Panc1 (cell line): ENCODE measurements at regions of chr16 and their contacts with region 1.

Region 1: DNA sequence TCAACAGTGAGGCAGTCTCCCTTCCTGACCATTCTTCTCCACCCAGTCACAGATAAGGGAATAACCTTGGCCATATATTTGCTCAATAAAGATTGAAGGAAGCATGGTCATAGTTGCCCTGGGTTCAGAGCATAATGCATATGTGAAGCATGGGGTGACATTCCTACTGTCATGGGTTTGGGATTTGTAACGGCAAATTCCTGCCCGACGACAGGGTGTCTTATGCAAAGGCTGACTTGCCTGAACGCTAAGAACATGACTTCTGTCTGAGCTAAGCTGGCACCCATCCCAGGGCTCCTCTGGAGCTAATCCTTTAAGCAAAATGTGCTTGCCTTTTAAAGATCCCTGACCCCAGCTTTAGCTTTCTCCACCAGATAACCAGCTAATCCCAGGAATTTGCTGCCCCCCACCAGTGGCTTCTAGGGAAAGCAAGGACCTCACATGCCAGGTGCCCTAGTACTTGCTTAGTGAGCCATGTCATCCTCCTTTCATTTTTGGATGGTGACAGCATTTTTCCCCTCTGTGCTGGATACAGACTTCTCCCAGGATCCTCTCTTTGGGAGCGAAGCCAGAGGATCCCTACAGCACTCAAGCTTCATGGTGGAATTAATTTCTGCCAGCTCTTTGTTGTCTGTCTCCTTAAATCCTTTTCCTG is 11.7 kb downstream of the SLC7A6OS start:
- DNase-seq: no peak
- ATAC-seq: peak; percentile 40
- H3K4me3 ChIP-seq: no peak overlapping the region
- H3K27ac ChIP-seq: no peak overlapping the region
- H3K4me1 ChIP-seq: peaks cover 22% of the 10 kb centered on the region
- H3K27me3 ChIP-seq: no peaks in the 10 kb centered on the region
- CTCF ChIP-seq: no peak

Region 2: DNA sequence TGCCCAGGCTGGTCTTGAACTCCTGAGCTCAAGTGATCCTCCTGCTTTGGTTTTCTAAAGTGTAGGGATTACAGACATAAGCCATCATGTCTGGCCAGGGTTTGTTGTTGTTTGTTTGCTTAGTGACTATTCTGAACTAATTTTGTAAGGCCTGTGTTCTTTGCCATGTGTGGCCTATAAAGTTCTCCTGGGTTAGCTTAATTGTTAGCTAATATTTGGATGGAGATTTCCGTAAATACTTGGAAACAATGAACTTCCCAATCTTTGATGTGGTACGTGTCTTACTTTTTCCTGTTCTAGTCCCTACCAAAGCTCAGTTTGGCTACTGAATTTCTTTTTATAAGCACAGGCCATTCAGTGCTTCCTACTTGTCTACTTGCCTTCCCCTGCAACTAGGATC is 251.0 kb before region 1 on chr16:
- CTCF ChIA-PET with region 1: no interaction called
- POLR2A ChIA-PET with region 1: interaction called, 10 read pairs
- in situ Hi-C with region 1: no loop called
- intact Hi-C with region 1: no loop called
- DNase-seq: no peak
- ATAC-seq: no peak
- H3K4me3 ChIP-seq: no peak overlapping the region
- H3K27ac ChIP-seq: no peak overlapping the region
- H3K4me1 ChIP-seq: no peaks in the 10 kb centered on the region
- H3K27me3 ChIP-seq: no peaks in the 10 kb centered on the region
- CTCF ChIP-seq: no peak

Region 3: GRCh38 chr16:68275611-68276191 is 23.3 kb before region 1 on chr16:
- CTCF ChIA-PET with region 1: no interaction called
- POLR2A ChIA-PET with region 1: no interaction called
- in situ Hi-C with region 1: no loop called
- intact Hi-C with region 1: no loop called
- DNase-seq: no peak
- ATAC-seq: no peak
- H3K4me3 ChIP-seq: no peak overlapping the region
- H3K27ac ChIP-seq: no peak overlapping the region
- H3K4me1 ChIP-seq: no peaks in the 10 kb centered on the region
- H3K27me3 ChIP-seq: no peaks in the 10 kb centered on the region
- CTCF ChIP-seq: no peak

Region 4: DNA sequence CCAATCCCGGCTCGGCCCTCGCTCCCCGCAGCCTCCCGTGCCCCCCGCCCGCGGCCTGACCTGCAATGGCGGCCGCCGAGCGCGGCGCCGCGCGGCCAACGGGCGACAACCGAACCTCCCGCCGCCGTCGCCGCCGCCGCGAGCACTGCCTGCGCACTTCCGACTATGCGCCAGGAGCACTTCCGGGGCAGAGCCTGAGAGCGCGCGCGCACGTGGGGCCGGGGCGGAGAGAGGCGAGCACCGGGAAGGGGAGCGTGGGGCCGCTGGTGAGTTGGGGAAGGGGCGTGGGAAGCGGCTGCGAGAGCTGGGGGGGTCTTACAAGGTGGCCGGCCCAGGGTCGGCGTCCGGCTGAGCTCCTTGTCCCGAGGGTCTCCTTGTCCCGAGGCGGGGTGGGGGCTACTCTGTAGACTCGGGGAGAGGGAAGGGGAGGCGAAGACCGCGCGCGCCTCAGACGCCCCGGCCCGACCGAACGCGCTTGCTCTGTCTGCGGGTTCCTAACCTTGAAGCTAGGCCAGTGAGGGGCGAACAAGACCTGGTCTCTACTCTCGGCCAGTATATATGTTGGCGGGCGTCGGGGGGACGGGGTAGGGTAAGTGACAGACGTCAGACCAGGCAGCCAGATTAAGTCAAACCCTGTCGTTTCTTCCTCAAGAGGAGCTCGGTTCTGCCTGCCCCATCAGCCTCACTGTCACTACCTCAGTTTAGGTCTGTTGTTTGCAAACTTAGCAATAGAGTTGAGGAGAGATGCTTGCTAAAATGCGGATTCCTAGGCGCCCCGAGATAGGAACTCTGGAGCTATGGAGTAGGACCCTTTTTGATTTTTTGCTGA is 833.6 kb after region 1 on chr16 and contains the starts of genes CHTF8 and UTP4:
- CTCF ChIA-PET with region 1: interaction called, 15 read pairs
- POLR2A ChIA-PET with region 1: no interaction called
- in situ Hi-C with region 1: no loop called
- intact Hi-C with region 1: no loop called
- DNase-seq: no peak
- ATAC-seq: peak; percentile 99
- H3K4me3 ChIP-seq: peak within 1 kb of the TSS; percentile 61 to 92
- H3K27ac ChIP-seq: peak within 1 kb of the TSS; percentile 89
- H3K4me1 ChIP-seq: peaks cover 17% of the 10 kb centered on the region
- H3K27me3 ChIP-seq: no peaks in the 10 kb centered on the region
- CTCF ChIP-seq: no peak
- total RNA-seq, gene CHTF8: 116 TPM
- total RNA-seq, gene UTP4: 61.7 TPM

Region 5: DNA sequence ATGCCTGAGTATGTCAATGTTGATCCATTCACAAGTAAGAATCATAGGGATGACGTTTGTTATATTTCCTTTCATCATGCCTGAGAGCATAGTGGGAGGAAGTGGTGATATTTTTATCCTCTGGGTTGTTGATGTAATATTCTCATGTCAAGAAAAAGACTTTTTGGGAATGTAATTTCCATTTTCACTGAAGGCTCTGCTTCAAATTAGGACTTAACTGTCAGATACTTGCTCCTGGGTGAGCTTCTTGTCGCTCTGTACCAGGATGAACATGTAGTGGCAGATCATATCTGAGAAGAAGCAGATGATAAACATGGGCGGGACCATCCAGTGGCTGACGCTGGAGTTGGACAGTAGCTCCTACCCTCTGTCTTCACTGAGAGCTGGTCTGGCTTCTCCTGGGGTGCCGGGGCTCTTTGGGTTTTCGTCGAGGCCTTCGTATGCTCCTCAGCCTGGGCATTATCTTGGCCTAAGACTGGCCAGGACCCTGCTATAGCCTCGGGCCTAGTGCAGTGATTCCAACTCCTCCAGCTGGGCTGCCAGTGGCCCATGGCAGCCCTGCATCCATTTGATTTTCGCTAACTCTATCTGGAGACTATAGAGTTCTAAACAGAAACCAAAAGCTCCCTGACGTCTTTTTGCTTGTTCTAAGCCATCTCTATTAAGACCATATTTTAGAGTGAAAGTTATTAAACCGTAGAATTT is 1145.0 kb after region 1 on chr16:
- CTCF ChIA-PET with region 1: no interaction called
- POLR2A ChIA-PET with region 1: no interaction called
- in situ Hi-C with region 1: no loop called
- intact Hi-C with region 1: no loop called
- DNase-seq: peak; percentile 15
- ATAC-seq: peak; percentile 84
- H3K4me3 ChIP-seq: peak overlapping the region; percentile 6 to 9; a peak in 2 of 4 replicates
- H3K27ac ChIP-seq: peak overlapping the region; percentile 87
- H3K4me1 ChIP-seq: peaks cover 45% of the 10 kb centered on the region
- H3K27me3 ChIP-seq: no peaks in the 10 kb centered on the region
- CTCF ChIP-seq: no peak